ENCODE measurements at regions of chr7 and their contacts with region 1.

Region 1: GRCh38 chr7:97027427-97028234 is 3.0 kb upstream of the DLX5 start:
- DNase-seq: peak; percentile 74
- ATAC-seq: peak; percentile 95

Region 2: GRCh38 chr7:96075510-96076349 is 951.9 kb before region 1 on chr7:
- intact Hi-C with region 1: loop called (anchors 2 kb)
- DNase-seq: peak; percentile 68
- ATAC-seq: peak; percentile 98

Region 3: GRCh38 chr7:97064967-97065587 is 37.4 kb after region 1 on chr7:
- intact Hi-C with region 1: no loop called
- DNase-seq: no peak
- ATAC-seq: peak; percentile 64